ENCODE measurements at regions of chr5 and their contacts with region 1.

Region 1: GRCh38 chr5:149646564-149646963 is 65.3 kb downstream of the ARHGEF37 start:
- DNase-seq: peak; percentile 83
- H3K4me3 ChIP-seq: peak overlapping the region; percentile 10
- H3K27ac ChIP-seq: peak overlapping the region; percentile 79
- H3K4me1 ChIP-seq: peaks cover 56% of the 10 kb centered on the region
- CTCF ChIP-seq: no peak

Region 2: GRCh38 chr5:149185067-149185466 is 461.5 kb before region 1 on chr5:
- CTCF ChIA-PET with region 1: no interaction called
- POLR2A ChIA-PET with region 1: no interaction called
- intact Hi-C with region 1: no loop called
- DNase-seq: no peak
- H3K4me3 ChIP-seq: no peak overlapping the region
- H3K27ac ChIP-seq: no peak overlapping the region
- H3K4me1 ChIP-seq: no peaks in the 10 kb centered on the region
- CTCF ChIP-seq: no peak

Region 3: DNA sequence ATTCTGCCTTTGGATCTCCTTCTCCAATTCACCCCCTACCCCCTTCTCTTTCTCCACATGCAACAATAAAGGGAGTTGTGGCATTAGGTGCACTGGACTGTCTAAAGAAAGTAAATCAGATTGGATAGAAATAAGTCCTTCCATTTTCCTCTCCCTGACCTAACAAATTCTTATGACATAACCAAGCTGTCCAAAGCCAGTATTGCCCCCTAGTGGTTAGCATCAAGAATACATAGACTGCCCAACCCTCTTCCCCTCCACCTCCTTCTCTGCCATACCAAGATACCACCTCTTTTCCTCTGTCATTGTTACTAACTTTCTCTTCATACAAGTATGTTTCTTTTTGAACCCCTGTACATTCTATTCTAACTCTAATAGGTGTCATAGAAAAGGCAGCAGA is 129.2 kb after region 1 on chr5:
- CTCF ChIA-PET with region 1: no interaction called
- POLR2A ChIA-PET with region 1: no interaction called
- intact Hi-C with region 1: loop called (anchors 5 kb)
- DNase-seq: peak; percentile 61
- H3K4me3 ChIP-seq: no peak overlapping the region
- H3K27ac ChIP-seq: no peak overlapping the region
- H3K4me1 ChIP-seq: peaks cover 48% of the 10 kb centered on the region
- CTCF ChIP-seq: peak; percentile 80

Measured in OCI-LY7 (cell line).